Right cardiac atrium (tissue), 5 donors: ENCODE measurements at regions of chr2 and their contacts with region 1.

Region 1: GRCh38 chr2:227238238-227239237 is 74.1 kb downstream of the COL4A3 start:
- DNase-seq: peak; percentile 68 to 88 (median 83)
- ATAC-seq: no peak
- H3K4me3 ChIP-seq: no peak overlapping the region
- H3K27ac ChIP-seq: no peak overlapping the region
- H3K4me1 ChIP-seq: no peaks in the 10 kb centered on the region
- H3K27me3 ChIP-seq: no peaks in the 10 kb centered on the region

Region 2: DNA sequence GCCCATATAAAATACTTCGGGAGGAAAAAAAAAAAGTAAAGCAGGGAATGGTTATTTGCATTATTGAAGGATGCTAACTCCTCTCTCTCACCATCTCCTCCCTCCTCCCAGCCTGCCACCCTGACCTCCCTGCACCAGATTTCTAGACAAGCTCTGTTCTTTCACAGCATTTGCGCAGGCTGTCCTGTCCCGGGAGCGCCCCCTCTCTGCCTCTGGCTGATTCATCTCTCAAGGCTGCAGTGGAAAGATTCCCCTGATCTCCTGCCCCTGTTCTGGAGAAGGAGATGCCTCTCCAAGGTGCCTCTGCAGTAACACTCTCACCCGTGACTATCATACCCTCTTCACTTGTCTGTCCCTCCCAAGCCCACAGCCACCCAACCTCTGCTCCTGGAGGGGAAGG is 113.0 kb before region 1 on chr2:
- intact Hi-C with region 1: loop called (anchors 2 to 5 kb)
- DNase-seq: no peak
- ATAC-seq: no peak
- H3K4me3 ChIP-seq: no peak overlapping the region
- H3K27ac ChIP-seq: no peak overlapping the region
- H3K4me1 ChIP-seq: no peaks in the 10 kb centered on the region
- H3K27me3 ChIP-seq: no peaks in the 10 kb centered on the region

Region 3: GRCh38 chr2:227130636-227131035 is 107.9 kb before region 1 on chr2:
- intact Hi-C with region 1: loop called (anchors 2 to 5 kb)
- DNase-seq: no peak
- ATAC-seq: no peak
- H3K4me3 ChIP-seq: no peak overlapping the region
- H3K27ac ChIP-seq: no peak overlapping the region
- H3K4me1 ChIP-seq: no peaks in the 10 kb centered on the region
- H3K27me3 ChIP-seq: no peaks in the 10 kb centered on the region

Region 4: GRCh38 chr2:227296671-227297405 is 58.3 kb after region 1 on chr2:
- intact Hi-C with region 1: no loop called
- DNase-seq: no peak
- ATAC-seq: no peak
- H3K4me3 ChIP-seq: no peak overlapping the region
- H3K27ac ChIP-seq: no peak overlapping the region
- H3K4me1 ChIP-seq: no peaks in the 10 kb centered on the region
- H3K27me3 ChIP-seq: no peaks in the 10 kb centered on the region